B cell (primary cell): ENCODE measurements at regions of chr5 and their contacts with region 1.

Region 1: DNA sequence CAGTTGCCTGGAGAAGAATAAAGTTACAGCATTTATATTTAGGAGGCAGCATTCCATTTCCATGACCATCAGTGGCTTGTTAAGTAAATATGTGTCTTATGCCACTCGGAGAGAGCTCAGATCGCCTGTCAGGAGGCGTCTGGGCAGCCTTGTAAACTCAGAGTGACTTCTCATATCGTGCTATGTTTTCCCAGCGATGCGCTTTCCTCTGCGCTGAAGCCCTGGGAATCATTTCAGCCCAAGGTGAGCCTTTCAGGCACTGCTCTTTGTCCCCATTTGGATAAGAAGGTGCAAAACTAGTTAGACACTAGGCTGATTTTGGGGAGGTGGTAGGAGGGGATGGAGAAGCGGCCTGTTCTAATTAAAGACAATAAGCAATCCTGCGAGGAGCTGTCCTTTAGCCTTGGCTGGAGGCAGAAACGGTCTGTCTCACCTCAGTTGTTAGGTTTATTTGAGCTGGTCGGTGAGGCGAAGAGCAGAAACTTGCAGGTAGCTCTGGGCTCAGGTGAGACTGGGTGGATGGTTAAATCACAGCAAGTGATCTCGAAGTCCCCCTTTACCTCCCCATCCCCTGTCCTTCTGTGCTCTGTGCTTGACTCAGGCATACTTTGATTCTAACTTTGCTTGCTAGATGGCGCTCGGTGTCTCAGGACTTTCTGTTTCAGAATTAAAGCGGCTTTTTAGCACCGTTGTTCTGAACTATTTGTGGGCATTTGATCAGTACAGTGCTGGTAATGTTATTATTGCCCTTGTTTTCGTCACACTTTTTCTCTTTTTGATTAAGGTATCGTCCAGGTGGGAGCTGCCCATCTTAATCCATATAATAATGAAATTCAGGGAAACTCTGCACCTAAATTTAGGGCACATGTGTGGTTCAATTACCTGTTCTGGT is 24.6 kb downstream of the NR2F1 start:
- DNase-seq: peak; percentile 71
- ATAC-seq: peak; percentile 41
- H3K4me3 ChIP-seq: peak overlapping the region in 2 of 5 experiments; percentile 7 to 18
- H3K4me3 Mint-ChIP-seq: peak overlapping the region; percentile 39
- H3K27ac ChIP-seq: no peak overlapping the region
- H3K27ac Mint-ChIP-seq: no peak overlapping the region
- H3K4me1 ChIP-seq: peaks cover 8 to 35% of the 10 kb centered on the region in 2 donors
- H3K4me1 Mint-ChIP-seq: peaks cover 20% of the 10 kb centered on the region
- H3K27me3 ChIP-seq: peaks cover 8 to 85% (median 80%) of the 10 kb centered on the region in 4 experiments
- H3K27me3 Mint-ChIP-seq: peaks cover 81% of the 10 kb centered on the region
- CTCF ChIP-seq: peak; percentile 53

Region 2: GRCh38 chr5:93557021-93557604 is 50.5 kb before region 1 on chr5:
- CTCF ChIA-PET with region 1: no interaction called
- POLR2A ChIA-PET with region 1: no interaction called
- intact Hi-C with region 1: no loop called
- DNase-seq: no peak
- ATAC-seq: no peak
- H3K4me3 ChIP-seq: no peak overlapping the region
- H3K4me3 Mint-ChIP-seq: no peak overlapping the region
- H3K27ac ChIP-seq: no peak overlapping the region
- H3K27ac Mint-ChIP-seq: no peak overlapping the region
- H3K4me1 ChIP-seq: no peaks in the 10 kb centered on the region
- H3K4me1 Mint-ChIP-seq: no peaks in the 10 kb centered on the region
- H3K27me3 ChIP-seq: peaks cover 0 to 7% (median 2%) of the 10 kb centered on the region in 4 experiments
- H3K27me3 Mint-ChIP-seq: peaks cover 28% of the 10 kb centered on the region
- CTCF ChIP-seq: no peak

Region 3: GRCh38 chr5:93570294-93571113 is 37.1 kb before region 1 on chr5:
- CTCF ChIA-PET with region 1: no interaction called
- POLR2A ChIA-PET with region 1: no interaction called
- intact Hi-C with region 1: loop called (anchors 5 kb)
- DNase-seq: peak; percentile 58
- ATAC-seq: peak; percentile 41
- H3K4me3 ChIP-seq: peak overlapping the region in 3 of 5 experiments; percentile 15 to 32 (median 30)
- H3K4me3 Mint-ChIP-seq: peak overlapping the region; percentile 65
- H3K27ac ChIP-seq: no peak overlapping the region
- H3K27ac Mint-ChIP-seq: no peak overlapping the region
- H3K4me1 ChIP-seq: peaks cover 27 to 35% of the 10 kb centered on the region in 2 donors
- H3K4me1 Mint-ChIP-seq: peaks cover 19% of the 10 kb centered on the region
- H3K27me3 ChIP-seq: peaks cover 2 to 73% (median 70%) of the 10 kb centered on the region in 4 experiments
- H3K27me3 Mint-ChIP-seq: peaks cover 66% of the 10 kb centered on the region
- CTCF ChIP-seq: no peak

Region 4: DNA sequence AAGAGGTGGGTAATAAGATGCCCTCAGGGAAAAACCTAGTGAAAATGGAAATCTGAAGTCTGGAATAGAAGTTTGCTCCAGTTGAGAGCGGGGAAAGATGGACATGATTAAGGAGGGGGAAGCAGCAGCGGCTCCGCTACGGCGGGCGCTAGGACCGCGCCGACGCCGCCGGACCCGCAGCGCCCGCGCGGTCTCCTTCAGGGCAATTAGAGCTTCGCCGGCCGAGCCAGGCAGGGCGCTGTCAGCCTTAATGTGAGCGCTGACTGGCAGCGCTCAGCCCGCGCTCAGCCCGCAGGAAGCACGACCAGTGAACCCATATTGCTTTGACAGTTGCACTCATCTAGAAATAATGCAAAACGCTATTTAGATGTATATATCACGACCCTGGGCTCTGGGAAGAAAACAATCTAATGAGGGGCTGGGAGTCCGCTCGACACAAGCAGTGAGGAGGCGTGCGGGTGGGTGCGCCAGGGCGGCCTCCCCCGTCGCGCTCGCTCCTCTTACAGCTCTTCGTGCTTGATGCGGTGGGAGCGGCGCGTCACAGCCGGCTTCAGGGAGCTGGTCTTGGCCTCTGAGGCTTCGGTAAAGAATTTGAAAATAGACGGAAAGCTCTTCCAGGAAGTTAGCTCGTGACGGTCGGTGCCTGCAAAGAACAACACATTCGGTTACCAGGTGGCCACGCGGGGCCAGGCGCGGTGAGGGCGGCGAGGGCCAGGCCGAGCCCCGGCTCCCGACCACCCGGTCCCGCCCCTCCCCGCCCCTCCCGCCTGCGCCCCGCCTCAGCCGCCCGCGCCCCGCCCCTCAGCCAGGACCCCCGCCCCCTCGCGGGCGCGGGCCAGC is 13.1 kb after region 1 on chr5:
- CTCF ChIA-PET with region 1: no interaction called
- POLR2A ChIA-PET with region 1: no interaction called
- intact Hi-C with region 1: loop called (anchors 1 kb)
- DNase-seq: peak; percentile 76
- ATAC-seq: peak; percentile 89
- H3K4me3 ChIP-seq: peak overlapping the region; percentile 8 to 84 (median 67)
- H3K4me3 Mint-ChIP-seq: peak overlapping the region; percentile 98
- H3K27ac ChIP-seq: no peak overlapping the region
- H3K27ac Mint-ChIP-seq: peak overlapping the region; percentile 60
- H3K4me1 ChIP-seq: peaks cover 5 to 16% of the 10 kb centered on the region in 2 donors
- H3K4me1 Mint-ChIP-seq: peaks cover 22% of the 10 kb centered on the region
- H3K27me3 ChIP-seq: peaks cover 0 to 8% (median 4%) of the 10 kb centered on the region in 4 experiments
- H3K27me3 Mint-ChIP-seq: peaks cover 7% of the 10 kb centered on the region
- CTCF ChIP-seq: no peak

Region 5: DNA sequence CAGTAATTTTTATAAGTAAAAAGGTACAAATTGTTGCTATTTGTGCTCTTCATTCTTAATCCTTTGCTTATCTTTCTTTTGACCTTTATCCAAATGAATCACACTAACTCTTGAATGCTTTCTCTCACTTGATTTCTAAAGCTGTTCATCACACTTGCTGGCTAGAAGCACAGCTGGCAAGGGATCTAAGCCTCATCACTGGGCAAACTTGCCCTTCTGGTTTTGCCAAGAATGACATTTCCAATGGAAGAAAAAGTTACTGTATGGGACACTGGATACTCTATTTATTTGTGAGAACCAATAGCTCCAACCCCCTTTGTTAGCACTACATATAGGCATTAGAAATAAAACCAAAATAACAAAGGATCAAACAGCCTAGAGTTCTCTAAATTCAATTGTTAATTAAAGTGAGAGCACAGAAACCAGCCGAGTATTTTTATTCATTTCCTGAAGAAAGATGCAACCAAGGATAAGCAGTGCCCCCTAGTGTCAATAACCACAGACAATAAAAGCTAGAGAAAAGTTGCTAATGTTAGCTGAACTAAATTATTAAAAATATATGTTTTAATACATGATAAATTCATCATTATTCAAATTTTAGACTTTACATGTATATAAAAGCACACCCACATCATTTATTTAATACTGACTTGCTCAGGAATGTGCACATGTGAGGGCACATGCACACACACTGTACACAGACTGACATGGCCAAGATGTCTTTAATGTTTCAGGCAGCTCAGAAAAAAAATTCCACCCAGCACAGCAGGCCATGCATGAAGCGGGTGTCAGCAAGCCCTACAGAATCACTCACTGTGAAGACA is 193.6 kb after region 1 on chr5:
- CTCF ChIA-PET with region 1: interaction called, 16 read pairs
- POLR2A ChIA-PET with region 1: no interaction called
- intact Hi-C with region 1: loop called (anchors 1 kb)
- DNase-seq: peak; percentile 44
- ATAC-seq: no peak
- H3K4me3 ChIP-seq: no peak overlapping the region
- H3K4me3 Mint-ChIP-seq: no peak overlapping the region
- H3K27ac ChIP-seq: no peak overlapping the region
- H3K27ac Mint-ChIP-seq: no peak overlapping the region
- H3K4me1 ChIP-seq: no peaks in the 10 kb centered on the region
- H3K4me1 Mint-ChIP-seq: no peaks in the 10 kb centered on the region
- H3K27me3 ChIP-seq: no peaks in the 10 kb centered on the region
- H3K27me3 Mint-ChIP-seq: no peaks in the 10 kb centered on the region
- CTCF ChIP-seq: peak; percentile 83